A549 (cell line): ENCODE measurements at regions of chr9 and their contacts with region 1.

Region 1: DNA sequence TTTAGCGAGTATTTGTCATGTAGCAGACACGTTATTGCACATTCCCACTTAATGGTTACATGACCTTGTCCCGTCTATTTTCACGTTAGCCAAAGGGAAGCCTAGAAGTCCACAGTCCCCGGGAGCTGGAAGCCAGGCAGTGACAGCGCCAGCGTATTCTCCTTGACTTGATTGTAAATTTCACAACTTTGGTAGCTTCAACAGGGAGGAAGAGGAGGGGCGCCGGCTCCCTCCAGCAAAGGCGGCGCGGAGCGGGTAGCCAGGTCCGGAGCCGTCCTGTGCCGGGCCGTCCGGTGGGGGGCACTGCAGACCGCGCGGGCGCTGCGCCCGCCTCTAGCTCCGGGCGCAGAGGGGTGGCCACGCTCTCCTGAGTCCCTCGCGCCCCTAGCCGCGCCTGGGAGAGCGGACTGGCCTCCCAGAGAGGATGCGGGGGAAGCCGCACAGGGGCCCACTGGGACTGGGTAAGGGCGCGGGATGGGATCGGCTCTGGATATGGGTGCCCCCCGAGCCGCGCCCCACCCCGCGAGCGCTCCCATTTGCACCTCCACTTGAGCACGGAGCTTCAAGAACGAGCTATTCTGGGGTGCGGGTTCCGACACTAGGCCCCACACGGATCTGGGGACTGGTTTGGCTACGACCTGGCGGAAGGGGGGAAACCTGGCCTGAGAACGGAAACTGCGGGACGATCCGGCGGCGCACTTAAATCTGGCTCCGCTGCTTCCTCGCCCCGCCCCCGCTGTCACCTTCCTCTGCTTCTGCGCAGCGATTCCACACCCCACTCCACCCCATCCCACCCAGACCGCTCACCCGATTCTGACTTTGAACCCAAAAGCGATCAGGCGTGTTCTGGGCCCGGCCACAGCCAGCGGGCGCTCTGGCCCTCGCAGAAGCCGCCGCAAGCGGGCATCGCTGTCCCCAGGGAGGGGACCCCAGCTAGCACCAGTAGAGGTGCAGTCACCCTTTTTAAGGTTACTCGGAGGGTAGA is 23.8 kb downstream of the KLF4 start:
- DNase-seq: peak; percentile 50 to 84
- ATAC-seq: peak; percentile 99 to 100
- H3K4me3 ChIP-seq: peak overlapping the region; percentile 79
- H3K27ac ChIP-seq: peak overlapping the region; percentile 80 to 83
- H3K4me1 ChIP-seq: peaks cover 9% of the 10 kb centered on the region; the same call in 1 of the 3 replicates
- CTCF ChIP-seq: peak; percentile 92
- EP300 ChIP-seq: no peak
- POLR2A ChIP-seq: no peak
- RAD21 ChIP-seq: peak; percentile 74 to 96

Region 2: GRCh38 chr9:107413315-107413714 is 52.4 kb before region 1 on chr9:
- CTCF ChIA-PET with region 1: no interaction called
- POLR2A ChIA-PET with region 1: no interaction called
- DNase-seq: no peak
- ATAC-seq: no peak
- H3K4me3 ChIP-seq: no peak overlapping the region
- H3K27ac ChIP-seq: no peak overlapping the region
- H3K4me1 ChIP-seq: no peaks in the 10 kb centered on the region
- CTCF ChIP-seq: no peak
- EP300 ChIP-seq: no peak
- POLR2A ChIP-seq: no peak
- RAD21 ChIP-seq: no peak

Region 3: DNA sequence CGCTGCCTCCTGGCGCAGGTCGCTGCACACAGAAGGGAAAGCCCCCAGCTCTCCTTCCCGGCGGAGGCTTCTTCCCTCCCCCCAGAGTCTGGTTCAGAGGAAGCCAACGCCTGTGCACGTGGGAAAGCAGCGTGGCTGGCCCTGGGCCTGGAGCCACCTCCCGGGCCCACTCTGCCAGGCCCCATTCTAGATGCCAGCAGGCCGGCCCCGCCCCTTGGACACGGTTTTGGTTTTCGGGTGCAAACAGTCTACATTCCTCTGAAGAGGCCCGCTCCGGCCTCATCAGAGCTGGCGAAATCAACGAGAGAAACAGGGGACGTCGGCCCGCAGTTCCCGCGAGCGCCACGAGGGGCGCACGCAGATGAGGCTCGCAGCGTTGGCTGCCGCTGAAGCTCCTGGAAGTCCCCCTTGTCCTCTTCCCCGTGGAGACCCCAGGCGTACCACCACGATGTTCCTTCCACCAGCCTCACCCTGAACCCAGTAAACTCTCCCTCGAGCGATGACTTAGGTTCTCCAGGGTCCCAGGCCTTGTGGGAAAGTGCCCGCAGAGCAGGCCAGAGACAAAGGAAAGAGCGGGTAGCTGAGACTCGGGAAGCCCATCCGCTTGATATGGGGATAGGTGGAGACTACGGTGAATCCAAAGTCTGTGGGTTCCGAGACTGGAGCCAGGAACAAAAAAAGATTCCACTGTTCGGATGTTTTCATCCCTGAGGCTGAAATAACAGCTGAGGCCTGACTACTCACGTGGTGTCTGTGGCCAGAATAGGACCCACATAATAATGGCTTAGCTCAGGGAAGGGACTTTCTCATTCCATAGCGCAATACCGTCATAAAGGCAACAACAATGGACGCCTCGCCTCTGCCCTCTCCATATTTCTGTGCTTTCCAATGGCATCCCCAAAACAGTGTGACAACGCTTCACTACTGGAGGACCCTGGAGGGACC is 40.4 kb before region 1 on chr9:
- CTCF ChIA-PET with region 1: interaction called, 25 read pairs
- POLR2A ChIA-PET with region 1: interaction called, 8 read pairs
- DNase-seq: peak; percentile 48 to 72
- ATAC-seq: peak; percentile 82 to 86
- H3K4me3 ChIP-seq: peak overlapping the region; percentile 26
- H3K27ac ChIP-seq: peak overlapping the region; percentile 78 to 89
- H3K4me1 ChIP-seq: peaks cover 5% of the 10 kb centered on the region; the same call in 2 of the 3 replicates
- CTCF ChIP-seq: peak; percentile 71
- EP300 ChIP-seq: no peak
- POLR2A ChIP-seq: no peak
- RAD21 ChIP-seq: peak; percentile 43 to 47; a peak in 4 of 5 replicates

Region 4: DNA sequence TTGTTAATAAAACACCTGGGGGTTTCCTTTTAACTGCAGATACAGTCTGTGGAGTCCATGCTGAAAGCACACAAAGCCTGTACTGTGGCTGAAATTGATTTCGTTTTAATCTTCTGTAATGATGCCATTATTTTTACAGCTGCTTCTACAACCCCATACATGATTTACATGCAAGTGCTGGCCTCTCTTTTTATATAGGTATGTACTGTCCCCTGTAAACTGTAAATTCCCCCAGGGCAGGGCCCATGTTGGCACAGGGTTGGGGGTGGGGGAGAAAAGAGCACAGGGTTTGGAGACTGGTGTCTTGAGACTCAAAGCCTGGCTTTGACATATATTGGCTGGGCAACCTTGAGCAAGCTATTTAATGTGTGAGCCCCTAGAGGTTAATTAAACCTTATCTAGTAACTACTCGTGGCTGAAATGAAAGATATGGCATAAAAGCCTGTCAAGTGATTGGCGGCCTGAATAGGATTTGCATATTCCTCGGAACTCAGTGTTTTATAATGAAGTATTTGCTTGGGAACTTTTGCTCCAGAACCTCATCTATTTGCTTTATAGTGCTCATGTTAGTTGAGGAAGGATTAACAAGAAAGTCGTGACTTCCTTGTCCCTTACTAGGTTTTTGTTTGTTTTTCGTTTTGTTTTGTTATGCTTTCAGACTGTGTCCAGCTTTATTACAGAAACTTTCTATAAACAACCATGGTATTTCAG is 10.2 kb before region 1 on chr9:
- CTCF ChIA-PET with region 1: interaction called, 36 read pairs
- POLR2A ChIA-PET with region 1: no interaction called
- DNase-seq: no peak
- ATAC-seq: no peak
- H3K4me3 ChIP-seq: no peak overlapping the region
- H3K27ac ChIP-seq: no peak overlapping the region
- H3K4me1 ChIP-seq: no peaks in the 10 kb centered on the region
- CTCF ChIP-seq: no peak
- EP300 ChIP-seq: no peak
- POLR2A ChIP-seq: no peak
- RAD21 ChIP-seq: no peak

Region 5: DNA sequence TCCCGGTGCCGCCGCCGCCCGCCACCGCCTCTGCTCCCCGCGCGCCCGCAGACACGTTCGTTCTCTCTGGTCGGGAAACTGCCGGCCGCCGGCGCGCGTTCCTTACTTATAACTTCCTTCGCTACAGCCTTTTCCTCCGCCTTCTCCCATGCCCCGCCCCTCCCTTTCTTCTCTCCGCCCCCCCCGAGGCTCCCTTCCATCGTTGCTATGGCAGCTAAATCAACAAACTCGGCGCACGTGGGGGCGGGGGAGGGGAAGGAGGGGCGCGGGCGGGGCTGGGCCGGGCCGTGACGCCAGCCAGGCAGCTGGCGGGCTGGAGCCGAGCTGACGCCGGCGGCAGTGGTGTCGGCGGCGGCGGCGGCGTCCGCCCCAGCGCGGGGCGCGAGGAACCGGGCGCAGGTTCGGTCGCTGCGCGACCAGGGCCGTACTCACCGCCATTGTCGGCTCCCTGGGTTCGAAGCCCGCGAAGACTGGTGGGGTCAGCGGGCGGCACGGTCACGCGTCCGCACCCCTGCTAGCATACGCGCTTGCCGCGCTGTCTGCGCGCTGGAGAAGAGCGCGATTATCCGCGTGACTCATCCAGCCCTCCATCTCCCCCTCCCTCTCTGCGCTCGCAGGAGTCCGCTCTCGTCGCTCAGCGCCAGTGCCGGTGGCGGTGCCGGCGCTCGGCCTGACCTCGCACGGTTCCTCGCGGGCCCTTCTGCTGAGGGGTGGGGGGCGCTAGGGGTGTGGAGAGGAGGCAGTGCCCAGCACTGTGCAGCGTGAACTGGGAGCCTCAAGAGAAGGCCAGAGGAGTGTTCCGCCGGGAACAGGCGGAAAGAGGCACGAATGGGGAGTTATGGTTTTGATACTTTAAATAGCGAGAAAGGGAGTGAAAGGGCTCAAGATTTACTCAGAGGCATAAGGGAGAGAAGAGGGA is 24.2 kb after region 1 on chr9 and contains the start of gene KLF4:
- CTCF ChIA-PET with region 1: interaction called, 17 read pairs
- POLR2A ChIA-PET with region 1: interaction called, 3 read pairs
- DNase-seq: peak; percentile 79 to 95
- ATAC-seq: peak; percentile 81
- H3K4me3 ChIP-seq: peak within 1 kb of the TSS; percentile 53
- H3K27ac ChIP-seq: peak within 1 kb of the TSS; percentile 90 to 91
- H3K4me1 ChIP-seq: peaks cover 25% of the 10 kb centered on the region
- CTCF ChIP-seq: no peak
- EP300 ChIP-seq: peak in 1 of 2 experiments; percentile 67; a peak in 1 of 5 replicates
- POLR2A ChIP-seq: peak; percentile 59
- RAD21 ChIP-seq: peak; percentile 9 to 56; a peak in 3 of 5 replicates
- polyA plus RNA-seq, gene KLF4: 8.3 and 10.1 TPM in 2 replicates

Region 6: GRCh38 chr9:108565651-108566378 is 1100.1 kb after region 1 on chr9:
- CTCF ChIA-PET with region 1: interaction called, 42 read pairs
- POLR2A ChIA-PET with region 1: no interaction called
- DNase-seq: peak; percentile 82 to 83
- ATAC-seq: peak; percentile 95 to 99
- H3K4me3 ChIP-seq: no peak overlapping the region
- H3K27ac ChIP-seq: peak overlapping the region; percentile 25 to 29; a peak in 2 of 6 replicates
- H3K4me1 ChIP-seq: peaks cover 14% of the 10 kb centered on the region; the same call in 1 of the 3 replicates
- CTCF ChIP-seq: peak; percentile 92
- EP300 ChIP-seq: no peak
- POLR2A ChIP-seq: no peak
- RAD21 ChIP-seq: peak; percentile 98

Region 7: DNA sequence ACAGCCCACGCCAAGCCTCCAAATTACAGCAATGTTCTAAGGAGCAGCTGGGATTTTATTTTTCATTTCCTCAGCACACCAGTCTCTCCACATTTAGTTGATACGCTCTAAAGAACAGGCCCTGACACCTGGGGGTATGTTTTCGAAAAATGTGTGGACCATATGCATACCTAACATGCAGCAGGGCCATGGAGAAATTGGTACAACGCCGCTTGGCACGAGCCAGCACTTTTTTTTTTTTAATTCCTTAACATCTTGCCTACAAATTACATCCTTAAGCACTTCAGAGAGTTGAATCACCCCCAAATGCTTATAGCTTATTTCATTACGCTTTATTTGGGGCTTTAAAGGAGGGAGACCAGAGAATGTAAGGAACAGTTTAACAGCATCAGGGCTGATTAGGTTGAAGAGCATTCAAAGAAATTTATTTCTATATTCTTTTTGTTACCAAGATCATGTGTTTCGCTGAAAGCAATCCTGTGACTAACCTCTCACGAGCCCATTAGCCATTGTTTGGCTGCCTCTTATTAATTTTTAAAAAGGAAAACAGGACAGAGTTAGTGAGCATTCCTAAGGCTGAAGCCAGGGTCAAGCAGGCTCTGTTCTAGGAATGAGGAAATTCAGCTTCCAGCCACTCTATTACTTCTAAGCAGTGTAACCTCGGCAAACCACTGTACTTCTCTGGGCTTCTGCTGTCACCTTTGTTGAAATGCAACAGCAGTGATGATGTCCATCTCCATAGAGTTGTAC is 1216.3 kb after region 1 on chr9:
- CTCF ChIA-PET with region 1: interaction called, 13 read pairs
- POLR2A ChIA-PET with region 1: no interaction called
- DNase-seq: no peak
- ATAC-seq: no peak
- H3K4me3 ChIP-seq: no peak overlapping the region
- H3K27ac ChIP-seq: no peak overlapping the region
- H3K4me1 ChIP-seq: no peaks in the 10 kb centered on the region
- CTCF ChIP-seq: no peak
- EP300 ChIP-seq: no peak
- POLR2A ChIP-seq: no peak
- RAD21 ChIP-seq: no peak

Region 8: GRCh38 chr9:108813951-108814601 is 1348.3 kb after region 1 on chr9:
- CTCF ChIA-PET with region 1: interaction called, 21 read pairs
- POLR2A ChIA-PET with region 1: no interaction called
- DNase-seq: peak; percentile 57 to 63
- ATAC-seq: peak; percentile 92 to 97
- H3K4me3 ChIP-seq: no peak overlapping the region
- H3K27ac ChIP-seq: no peak overlapping the region
- H3K4me1 ChIP-seq: peaks cover 9% of the 10 kb centered on the region; the same call in 2 of the 3 replicates
- CTCF ChIP-seq: peak; percentile 68
- EP300 ChIP-seq: no peak
- POLR2A ChIP-seq: no peak
- RAD21 ChIP-seq: peak; percentile 78 to 92